ENCODE measurements at regions of chr14 and their contacts with region 1.

Region 1: GRCh38 chr14:50773632-50774541 is 57.1 kb downstream of the NIN start:
- DNase-seq: no peak
- ATAC-seq: peak; percentile 58 to 60

Region 2: GRCh38 chr14:50542941-50543418 is 230.9 kb before region 1 on chr14:
- intact Hi-C with region 1: loop called in 1 of 2 experiments (anchors 5 kb)
- DNase-seq: no peak
- ATAC-seq: peak; percentile 57 to 65

Region 3: GRCh38 chr14:50635141-50635540 is 138.7 kb before region 1 on chr14:
- intact Hi-C with region 1: no loop called
- DNase-seq: no peak
- ATAC-seq: no peak

Region 4: DNA sequence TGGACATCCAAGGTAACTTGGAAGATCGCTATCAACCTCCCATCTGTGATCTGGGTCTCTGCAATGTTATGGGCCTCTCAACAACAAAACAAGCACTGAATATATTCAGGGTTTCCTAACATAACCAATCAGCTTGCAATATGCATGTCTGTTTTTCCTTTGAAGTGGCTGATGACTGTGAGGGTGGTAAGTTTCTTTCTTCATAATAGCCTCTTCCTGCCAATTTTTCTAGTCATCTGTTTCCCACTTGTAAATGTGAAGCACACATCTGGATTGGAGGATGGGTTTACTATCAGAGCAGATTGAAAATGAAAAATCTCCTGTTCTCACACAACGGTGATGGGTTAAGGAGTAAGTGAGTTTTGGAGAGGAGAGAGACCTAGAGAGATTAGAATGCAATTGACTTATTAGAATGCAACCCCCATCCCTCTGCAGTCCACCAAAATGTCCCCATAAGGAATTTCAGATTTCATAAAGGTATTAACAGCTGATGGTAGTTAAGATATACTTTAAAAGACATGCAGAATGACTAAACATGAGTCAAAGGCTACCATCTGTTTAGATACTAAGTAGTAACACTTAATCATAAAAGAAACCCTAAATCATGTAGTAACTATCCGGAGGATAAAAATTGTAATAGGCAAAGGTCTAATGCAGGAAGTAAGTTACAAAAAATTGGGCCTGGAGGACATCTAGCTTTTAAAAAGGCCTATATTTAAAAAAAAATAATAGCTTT is 47.3 kb before region 1 on chr14:
- intact Hi-C with region 1: no loop called
- DNase-seq: no peak
- ATAC-seq: no peak

Region 5: DNA sequence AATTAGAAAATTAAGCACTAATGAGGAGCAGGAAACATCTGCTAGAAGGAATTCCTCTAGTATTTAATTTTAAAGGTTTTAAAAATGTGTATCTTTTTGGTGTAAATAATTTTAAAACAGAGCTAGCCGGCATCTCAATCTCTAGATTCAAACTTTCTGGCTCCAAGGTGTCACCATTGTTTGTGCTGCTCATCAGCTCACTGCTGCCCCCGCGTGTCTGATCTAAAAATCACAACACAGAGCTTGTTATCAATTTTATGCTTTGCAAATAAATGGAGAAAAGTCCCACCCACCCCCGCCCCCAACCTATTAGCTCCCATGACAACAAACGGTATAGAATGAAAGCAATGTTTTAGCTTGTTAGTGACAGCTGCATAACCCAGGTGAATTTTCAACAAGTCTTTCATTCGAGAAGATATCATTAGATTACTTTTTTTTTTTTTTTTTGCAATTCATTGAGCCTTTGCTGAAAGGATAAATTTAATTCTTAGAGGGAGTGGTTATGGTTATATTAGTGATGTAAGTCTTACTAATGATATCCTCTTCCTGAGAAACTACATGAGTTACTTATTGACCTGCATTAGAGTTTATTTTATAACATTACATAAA is 86.7 kb after region 1 on chr14:
- intact Hi-C with region 1: loop called in 1 of 2 experiments (anchors 5 kb)
- DNase-seq: peak; percentile 83
- ATAC-seq: peak; percentile 79

Measured in left cardiac atrium (tissue), 4 donors.